Posterior vena cava (tissue), 2 donors: ENCODE measurements at regions of chr14 and their contacts with region 1.

Region 1: GRCh38 chr14:31990183-31990857 is 86.8 kb upstream of the ARHGAP5 start:
- DNase-seq: no peak

Region 2: DNA sequence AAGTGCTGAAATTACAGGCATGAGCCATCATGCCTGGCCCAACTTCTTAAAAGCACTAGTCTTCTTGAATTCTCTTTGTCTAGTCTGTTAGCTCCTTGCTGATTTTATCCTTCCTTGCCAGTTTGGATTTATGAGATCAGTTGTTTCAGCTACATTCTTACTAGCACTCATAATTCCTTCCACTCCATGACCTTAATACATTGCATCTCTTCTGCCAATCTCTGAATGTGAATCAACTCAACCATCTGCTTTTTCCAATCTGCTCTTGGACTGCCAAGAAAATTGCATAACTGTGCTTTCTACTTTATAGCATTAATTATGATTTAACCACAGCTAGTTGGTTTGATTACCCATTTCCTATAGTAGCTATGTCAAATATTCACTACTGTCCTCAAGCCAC is 555.0 kb before region 1 on chr14:
- intact Hi-C with region 1: no loop called
- DNase-seq: no peak

Region 3: DNA sequence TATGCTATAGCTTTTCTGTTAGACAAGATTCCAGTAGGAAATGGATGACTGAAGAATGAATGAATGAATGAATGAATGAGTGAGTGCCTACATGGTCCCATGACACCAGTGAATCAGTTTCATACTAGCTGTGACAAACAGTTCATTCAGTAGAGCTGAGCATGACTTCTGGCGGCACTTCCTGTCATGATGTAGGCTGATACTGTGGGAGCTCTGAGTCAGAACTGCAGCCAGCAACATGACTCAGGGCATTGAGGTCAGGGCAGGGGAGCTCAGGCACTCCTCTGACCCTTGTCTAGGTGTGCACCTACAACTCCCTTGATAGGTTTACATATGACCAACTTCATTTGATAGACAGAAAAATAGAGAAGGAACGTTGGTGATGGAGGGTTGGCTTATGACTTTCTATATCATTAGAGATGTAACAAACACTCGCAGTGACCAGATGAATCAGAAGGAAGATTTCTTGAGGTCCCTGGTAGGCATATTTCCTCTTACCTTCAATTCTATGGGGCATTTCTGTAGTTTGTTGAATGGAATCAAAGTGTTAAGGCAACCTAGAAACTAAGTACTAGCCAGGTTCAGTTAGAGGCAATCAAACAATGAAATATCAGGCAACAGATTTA is 52.5 kb before region 1 on chr14:
- intact Hi-C with region 1: loop called in 1 of 2 experiments (anchors 10 kb)
- DNase-seq: no peak

Region 4: DNA sequence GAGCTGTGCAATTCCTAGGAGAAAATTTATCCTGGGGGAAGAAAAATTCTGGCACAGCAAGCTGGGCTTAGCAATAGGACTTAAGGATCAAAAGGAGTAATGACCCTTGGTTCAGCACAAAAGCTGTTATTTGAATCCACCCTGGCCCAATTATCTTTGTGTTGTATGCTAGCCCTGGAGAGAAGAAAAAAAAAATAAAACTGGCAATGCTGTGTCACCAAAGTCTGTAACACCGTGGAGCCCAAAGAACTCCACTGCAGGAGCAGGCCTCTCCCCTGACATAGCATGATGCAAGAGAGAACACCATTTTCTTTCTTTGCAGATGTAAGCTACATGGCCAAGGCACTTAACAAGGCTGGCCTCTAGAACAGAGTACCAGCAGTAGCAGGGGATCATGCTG is 23.7 kb after region 1 on chr14:
- intact Hi-C with region 1: loop called in 1 of 2 experiments (anchors 2 kb)
- DNase-seq: no peak